Activated naive CD4-positive, alpha-beta T cell treated with anti-CD3 and anti-CD28 coated beads for 36 hours (primary cell): ENCODE measurements at regions of chr12 and their contacts with region 1.

Region 1: GRCh38 chr12:113152835-113153814 is 3.6 kb downstream of the CFAP73 start:
- DNase-seq: peak; percentile 85
- H3K4me3 Mint-ChIP-seq: peak overlapping the region; percentile 75
- H3K27ac Mint-ChIP-seq: no peak overlapping the region
- H3K4me1 Mint-ChIP-seq: peaks cover 17% of the 10 kb centered on the region
- H3K27me3 Mint-ChIP-seq: peaks cover 7% of the 10 kb centered on the region

Region 2: DNA sequence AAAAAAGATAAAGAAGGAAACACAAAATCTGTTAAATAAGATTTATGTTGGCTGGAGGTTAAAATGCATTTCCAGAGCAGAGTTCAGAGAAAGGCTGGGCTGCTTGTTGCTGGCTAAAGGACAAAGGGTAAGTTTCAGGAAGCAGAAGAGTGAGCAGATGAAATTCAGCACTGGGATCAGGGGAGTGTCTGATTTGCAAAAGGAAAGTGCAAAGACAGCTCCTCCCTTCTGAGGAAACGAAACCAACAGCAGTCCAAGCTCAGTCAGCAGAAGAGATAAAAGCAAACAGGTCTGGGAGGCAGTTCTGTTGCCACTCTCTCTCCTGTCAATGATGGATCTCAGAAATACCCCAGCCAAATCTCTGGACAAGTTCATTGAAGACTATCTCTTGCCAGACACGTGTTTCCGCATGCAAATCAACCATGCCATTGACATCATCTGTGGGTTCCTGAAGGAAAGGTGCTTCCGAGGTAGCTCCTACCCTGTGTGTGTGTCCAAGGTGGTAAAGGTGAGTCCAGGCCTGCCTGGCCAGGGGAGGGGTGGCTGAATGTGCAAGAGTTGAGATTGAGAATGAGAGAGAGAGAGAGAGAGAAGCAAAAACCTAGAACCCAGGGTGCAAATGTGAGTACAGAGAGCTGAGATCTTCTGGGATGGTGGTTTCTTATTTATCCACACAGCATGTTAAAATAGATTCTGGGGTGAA is 246.3 kb before region 1 on chr12 and contains the start of gene OAS1:
- CTCF ChIA-PET with region 1: interaction called, 3 read pairs
- intact Hi-C with region 1: loop called (anchors 5 kb)
- DNase-seq: peak; percentile 59
- H3K4me3 Mint-ChIP-seq: peak within 1 kb of the TSS; percentile 87
- H3K27ac Mint-ChIP-seq: peak within 1 kb of the TSS; percentile 81
- H3K4me1 Mint-ChIP-seq: peaks cover 62% of the 10 kb centered on the region
- H3K27me3 Mint-ChIP-seq: no peaks in the 10 kb centered on the region
- total RNA-seq, gene OAS1: 41.6 to 41.7 TPM

Region 3: GRCh38 chr12:113098446-113098896 is 54.7 kb before region 1 on chr12:
- CTCF ChIA-PET with region 1: interaction called, 8 read pairs
- intact Hi-C with region 1: loop called (anchors 1 kb)
- DNase-seq: peak; percentile 88
- H3K4me3 Mint-ChIP-seq: no peak overlapping the region
- H3K27ac Mint-ChIP-seq: no peak overlapping the region
- H3K4me1 Mint-ChIP-seq: peaks cover 18% of the 10 kb centered on the region
- H3K27me3 Mint-ChIP-seq: no peaks in the 10 kb centered on the region

Region 4: GRCh38 chr12:113103756-113104450 is 49.2 kb before region 1 on chr12:
- CTCF ChIA-PET with region 1: interaction called, 8 read pairs
- intact Hi-C with region 1: loop called (anchors 1 kb)
- DNase-seq: peak; percentile 79
- H3K4me3 Mint-ChIP-seq: peak overlapping the region; percentile 71
- H3K27ac Mint-ChIP-seq: peak overlapping the region; percentile 9
- H3K4me1 Mint-ChIP-seq: peaks cover 8% of the 10 kb centered on the region
- H3K27me3 Mint-ChIP-seq: no peaks in the 10 kb centered on the region

Region 5: DNA sequence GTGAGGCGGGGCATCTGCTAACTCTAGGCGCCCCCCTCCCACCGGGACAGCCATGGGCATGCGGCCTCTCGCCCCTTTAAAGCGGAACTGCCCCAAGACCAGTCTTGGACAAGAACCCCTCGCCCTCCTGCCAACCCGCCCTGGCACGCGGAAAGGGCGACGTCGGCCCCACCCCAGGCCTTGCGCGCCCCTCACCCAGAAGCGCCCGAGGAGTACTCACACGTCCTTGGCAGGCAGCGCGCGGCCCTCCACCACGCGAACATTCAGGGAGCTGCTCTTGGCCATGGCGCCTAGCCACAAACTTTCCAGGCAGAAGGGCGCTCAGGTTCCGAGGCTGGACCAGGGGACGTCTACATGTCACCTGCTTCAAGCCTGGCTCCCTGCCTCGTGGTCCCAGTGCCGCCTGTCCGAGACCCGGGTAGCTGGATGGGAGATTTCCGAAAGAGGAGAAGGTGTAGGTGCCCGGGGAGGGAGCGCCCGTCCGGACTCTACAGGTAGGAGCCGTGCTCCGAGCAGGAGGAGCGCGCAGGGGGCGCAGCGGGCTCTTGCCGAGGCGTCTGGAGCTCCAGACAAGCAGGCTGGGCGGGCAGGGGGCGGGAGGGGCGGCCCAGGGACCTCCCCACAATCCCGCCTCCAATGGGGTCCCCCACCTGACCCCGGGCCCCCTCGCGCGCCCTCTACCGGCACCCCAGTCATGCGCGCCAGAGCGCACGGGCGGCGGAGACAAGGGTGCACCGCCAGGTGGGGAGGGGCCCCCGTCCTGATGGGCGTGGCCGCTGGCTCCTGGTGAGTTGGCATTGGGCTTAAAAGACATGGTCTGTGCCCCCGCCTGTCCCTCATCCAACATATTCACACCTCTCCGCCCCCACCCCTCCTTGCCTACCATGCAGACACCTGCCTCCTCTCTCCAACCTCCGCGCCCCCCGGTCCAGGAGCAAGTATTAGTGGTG is 17.7 kb before region 1 on chr12 and contains the start of gene RASAL1:
- CTCF ChIA-PET with region 1: interaction called, 21 read pairs
- intact Hi-C with region 1: loop called (anchors 1 kb)
- DNase-seq: peak; percentile 90
- H3K4me3 Mint-ChIP-seq: peak within 1 kb of the TSS; percentile 70
- H3K27ac Mint-ChIP-seq: peak within 1 kb of the TSS; percentile 73
- H3K4me1 Mint-ChIP-seq: peaks cover 18% of the 10 kb centered on the region
- H3K27me3 Mint-ChIP-seq: no peaks in the 10 kb centered on the region
- total RNA-seq, gene RASAL1: 2.6 to 3.2 TPM

Region 6: GRCh38 chr12:113174461-113175384 is 21.6 kb after region 1 on chr12:
- CTCF ChIA-PET with region 1: interaction called, 18 read pairs
- intact Hi-C with region 1: loop called (anchors 1 kb)
- DNase-seq: peak; percentile 86
- H3K4me3 Mint-ChIP-seq: no peak overlapping the region
- H3K27ac Mint-ChIP-seq: no peak overlapping the region
- H3K4me1 Mint-ChIP-seq: no peaks in the 10 kb centered on the region
- H3K27me3 Mint-ChIP-seq: no peaks in the 10 kb centered on the region

Region 7: DNA sequence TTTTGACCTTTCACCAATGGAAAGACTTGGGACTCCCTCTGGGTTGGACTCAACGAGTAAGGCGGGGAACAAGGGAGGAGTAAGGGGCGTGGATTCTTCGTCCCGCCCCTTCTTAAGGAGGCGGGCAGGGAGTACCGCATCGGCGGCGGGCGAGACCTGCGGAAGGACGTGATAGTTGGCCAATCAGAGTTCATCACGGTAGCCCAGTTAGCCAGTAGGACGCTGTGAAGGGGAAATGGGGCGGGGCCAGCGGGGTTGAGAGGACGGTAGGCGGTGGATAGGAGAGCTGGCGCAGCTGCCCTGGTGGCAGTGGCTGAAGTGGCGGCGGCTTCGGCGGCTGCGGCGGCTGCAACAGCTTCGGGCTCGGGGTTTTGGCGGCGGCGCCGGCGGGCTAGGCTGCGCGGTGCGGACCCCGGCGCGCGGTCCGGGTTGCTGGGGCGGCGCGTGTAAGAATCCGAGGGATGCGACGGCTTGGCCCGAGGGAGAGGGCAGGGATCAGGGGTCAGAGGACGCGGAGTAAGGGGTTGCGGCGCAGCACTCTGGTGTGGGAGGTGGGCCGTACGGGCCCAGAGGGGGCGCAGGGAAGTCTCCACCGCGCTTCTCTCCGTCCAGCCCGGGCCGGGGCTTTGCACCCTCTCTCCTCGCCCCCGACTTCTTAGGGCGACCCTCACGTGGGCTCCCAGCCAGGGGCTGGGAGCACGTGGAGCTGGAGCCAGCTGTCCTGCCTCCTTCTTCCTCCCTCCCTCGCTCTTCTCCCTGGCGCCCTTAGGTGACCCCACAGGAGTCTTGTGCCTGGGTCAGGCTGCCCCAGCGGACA is 68.3 kb after region 1 on chr12 and contains the start of gene TPCN1:
- CTCF ChIA-PET with region 1: no interaction called
- intact Hi-C with region 1: no loop called
- DNase-seq: peak; percentile 100
- H3K4me3 Mint-ChIP-seq: peak within 1 kb of the TSS; percentile 96
- H3K27ac Mint-ChIP-seq: peak within 1 kb of the TSS; percentile 92
- H3K4me1 Mint-ChIP-seq: peaks cover 40% of the 10 kb centered on the region
- H3K27me3 Mint-ChIP-seq: no peaks in the 10 kb centered on the region
- total RNA-seq, gene TPCN1: 47.3 to 49.2 TPM